CD8-positive, alpha-beta T cell (primary cell): ENCODE measurements at regions of chrX and their contacts with region 1.

Region 1: DNA sequence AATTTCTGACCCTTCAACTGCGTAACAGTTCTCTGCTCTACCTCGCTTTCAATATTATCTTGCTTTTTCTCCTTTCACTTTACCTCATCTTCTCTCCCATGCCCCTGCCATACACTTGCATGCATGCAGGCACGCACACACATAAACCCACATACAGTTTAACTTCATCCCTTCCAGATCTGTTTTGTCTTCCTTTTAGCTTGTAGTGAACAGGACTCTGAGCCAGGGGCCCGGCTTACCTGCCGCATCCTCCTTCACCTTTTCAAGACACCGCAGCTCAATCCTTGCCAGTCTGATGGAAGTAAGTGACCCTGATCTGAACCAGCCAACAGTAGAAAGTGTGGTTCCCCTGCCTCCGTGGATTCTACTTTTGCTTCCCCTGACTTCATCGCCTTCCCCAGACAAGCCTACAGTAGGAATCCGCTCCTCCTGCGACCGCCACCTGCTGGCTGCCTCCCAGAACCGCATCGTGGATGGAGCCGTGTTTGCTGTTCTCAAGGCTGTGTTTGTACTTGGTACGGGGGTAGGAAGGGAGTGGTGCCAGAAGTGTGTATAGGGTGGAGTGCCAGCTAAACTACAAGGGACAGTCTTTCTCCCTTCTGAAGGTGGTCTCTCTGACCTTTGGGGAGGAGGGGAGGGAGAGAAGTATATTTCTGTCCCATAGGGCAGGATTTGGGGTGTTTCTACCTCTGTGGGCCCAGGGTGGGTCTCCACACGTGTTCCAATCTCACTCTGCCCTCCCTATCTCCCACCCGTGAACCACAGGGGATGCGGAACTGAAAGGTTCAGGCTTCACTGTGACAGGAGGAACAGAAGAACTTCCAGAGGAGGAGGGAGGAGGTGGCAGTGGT is 10.7 kb downstream of the MED12 start:
- DNase-seq: peak; percentile 58 to 86 (median 73)
- ATAC-seq: peak; percentile 98
- H3K4me3 ChIP-seq: no peak overlapping the region
- H3K4me3 Mint-ChIP-seq: no peak overlapping the region
- H3K27ac ChIP-seq: peak overlapping the region in 1 of 2 experiments; percentile 32
- H3K27ac Mint-ChIP-seq: peak overlapping the region; percentile 91
- H3K4me1 ChIP-seq: peaks cover 10% of the 10 kb centered on the region
- H3K4me1 Mint-ChIP-seq: peaks cover 19% of the 10 kb centered on the region
- H3K27me3 ChIP-seq: no peaks in the 10 kb centered on the region
- H3K27me3 Mint-ChIP-seq: no peaks in the 10 kb centered on the region
- CTCF ChIP-seq: peak; percentile 62

Region 2: DNA sequence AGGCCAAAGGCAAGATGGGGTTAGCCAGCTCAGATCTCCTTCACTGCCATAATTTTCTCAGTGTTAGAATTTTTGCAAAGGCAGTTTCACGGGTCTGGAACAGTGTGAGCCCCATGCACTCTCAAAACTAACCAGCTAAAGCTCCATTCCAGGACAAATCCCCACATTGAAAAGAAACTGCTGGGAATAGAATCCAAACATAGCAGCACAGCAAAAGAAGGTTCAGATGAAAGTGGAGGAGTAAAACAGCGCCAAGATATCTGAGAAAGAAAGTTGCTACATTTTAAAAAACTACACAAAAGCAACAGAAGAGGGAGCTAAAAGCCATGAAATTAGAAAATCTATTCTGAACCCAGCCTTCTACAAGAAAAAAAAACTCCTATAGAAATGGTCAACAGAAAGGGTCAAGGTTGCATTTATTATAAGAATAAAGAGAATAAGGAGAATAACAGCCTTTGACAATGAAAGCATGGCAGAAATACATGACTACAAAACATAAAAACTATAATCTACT is 158.6 kb before region 1 on chrX:
- CTCF ChIA-PET with region 1: interaction called, 4 read pairs
- POLR2A ChIA-PET with region 1: no interaction called
- intact Hi-C with region 1: loop called in 1 of 2 experiments (anchors 2 kb)
- DNase-seq: peak in 2 of 9 experiments; percentile 15 to 29
- ATAC-seq: no peak
- H3K4me3 ChIP-seq: no peak overlapping the region
- H3K4me3 Mint-ChIP-seq: peak overlapping the region; percentile 62
- H3K27ac ChIP-seq: no peak overlapping the region
- H3K27ac Mint-ChIP-seq: no peak overlapping the region
- H3K4me1 ChIP-seq: no peaks in the 10 kb centered on the region
- H3K4me1 Mint-ChIP-seq: peaks cover 6% of the 10 kb centered on the region
- H3K27me3 ChIP-seq: no peaks in the 10 kb centered on the region
- H3K27me3 Mint-ChIP-seq: no peaks in the 10 kb centered on the region
- CTCF ChIP-seq: peak; percentile 33

Region 3: GRCh38 chrX:71068049-71068763 is 60.9 kb before region 1 on chrX and contains the start of gene SNX12:
- CTCF ChIA-PET with region 1: no interaction called
- POLR2A ChIA-PET with region 1: no interaction called
- intact Hi-C with region 1: loop called in 1 of 2 experiments (anchors 5 kb)
- DNase-seq: peak; percentile 70 to 95 (median 84)
- ATAC-seq: peak; percentile 92
- H3K4me3 ChIP-seq: peak within 1 kb of the TSS; percentile 76 to 88
- H3K4me3 Mint-ChIP-seq: peak within 1 kb of the TSS; percentile 94
- H3K27ac ChIP-seq: peak within 1 kb of the TSS; percentile 86 to 91
- H3K27ac Mint-ChIP-seq: peak within 1 kb of the TSS; percentile 99
- H3K4me1 ChIP-seq: peaks cover 13% of the 10 kb centered on the region
- H3K4me1 Mint-ChIP-seq: peaks cover 27% of the 10 kb centered on the region
- H3K27me3 ChIP-seq: no peaks in the 10 kb centered on the region
- H3K27me3 Mint-ChIP-seq: no peaks in the 10 kb centered on the region
- CTCF ChIP-seq: no peak
- total RNA-seq, gene SNX12: 23.9 to 27.1 TPM

Region 4: GRCh38 chrX:71095543-71095911 is 33.6 kb before region 1 on chrX and contains the start of gene FOXO4:
- CTCF ChIA-PET with region 1: interaction called, 80 read pairs
- POLR2A ChIA-PET with region 1: interaction called, 27 read pairs
- intact Hi-C with region 1: loop called (anchors 1 kb)
- DNase-seq: peak; percentile 74 to 94 (median 88)
- ATAC-seq: peak; percentile 82
- H3K4me3 ChIP-seq: peak within 1 kb of the TSS; percentile 73 to 78
- H3K4me3 Mint-ChIP-seq: peak within 1 kb of the TSS; percentile 93
- H3K27ac ChIP-seq: peak within 1 kb of the TSS; percentile 34 to 68
- H3K27ac Mint-ChIP-seq: peak within 1 kb of the TSS; percentile 93
- H3K4me1 ChIP-seq: peaks cover 30% of the 10 kb centered on the region
- H3K4me1 Mint-ChIP-seq: peaks cover 37% of the 10 kb centered on the region
- H3K27me3 ChIP-seq: no peaks in the 10 kb centered on the region
- H3K27me3 Mint-ChIP-seq: no peaks in the 10 kb centered on the region
- CTCF ChIP-seq: no peak
- total RNA-seq, gene FOXO4: 24.1 to 32.6 TPM

Region 5: GRCh38 chrX:71103110-71103983 is 25.8 kb before region 1 on chrX:
- CTCF ChIA-PET with region 1: interaction called, 80 read pairs
- POLR2A ChIA-PET with region 1: interaction called, 27 read pairs
- intact Hi-C with region 1: loop called (anchors 1 kb)
- DNase-seq: peak in 7 of 9 experiments; percentile 51 to 83 (median 69)
- ATAC-seq: peak; percentile 41
- H3K4me3 ChIP-seq: peak overlapping the region; percentile 23 to 31
- H3K4me3 Mint-ChIP-seq: peak overlapping the region; percentile 80
- H3K27ac ChIP-seq: peak overlapping the region; percentile 62 to 100
- H3K27ac Mint-ChIP-seq: peak overlapping the region; percentile 96
- H3K4me1 ChIP-seq: peaks cover 85% of the 10 kb centered on the region
- H3K4me1 Mint-ChIP-seq: peaks cover 83% of the 10 kb centered on the region
- H3K27me3 ChIP-seq: no peaks in the 10 kb centered on the region
- H3K27me3 Mint-ChIP-seq: no peaks in the 10 kb centered on the region
- CTCF ChIP-seq: no peak

Region 6: GRCh38 chrX:71111141-71111843 is 17.8 kb before region 1 on chrX and contains the start of gene IL2RG:
- CTCF ChIA-PET with region 1: interaction called, 21 read pairs
- POLR2A ChIA-PET with region 1: interaction called, 12 read pairs
- intact Hi-C with region 1: no loop called
- DNase-seq: peak; percentile 53 to 94 (median 76)
- ATAC-seq: peak; percentile 85
- H3K4me3 ChIP-seq: peak within 1 kb of the TSS; percentile 74 to 84
- H3K4me3 Mint-ChIP-seq: peak within 1 kb of the TSS; percentile 98
- H3K27ac ChIP-seq: peak within 1 kb of the TSS; percentile 96 to 100
- H3K27ac Mint-ChIP-seq: peak within 1 kb of the TSS; percentile 99
- H3K4me1 ChIP-seq: peaks cover 41% of the 10 kb centered on the region
- H3K4me1 Mint-ChIP-seq: peaks cover 42% of the 10 kb centered on the region
- H3K27me3 ChIP-seq: no peaks in the 10 kb centered on the region
- H3K27me3 Mint-ChIP-seq: no peaks in the 10 kb centered on the region
- CTCF ChIP-seq: no peak
- total RNA-seq, gene IL2RG: 166 to 197 TPM

Region 7: GRCh38 chrX:71118032-71118984 is 10.8 kb before region 1 on chrX and contains the start of gene MED12:
- CTCF ChIA-PET with region 1: interaction called, 21 read pairs
- POLR2A ChIA-PET with region 1: interaction called, 8 read pairs
- intact Hi-C with region 1: loop called in 1 of 2 experiments (anchors 1 kb)
- DNase-seq: peak; percentile 56 to 90 (median 83)
- ATAC-seq: peak; percentile 97
- H3K4me3 ChIP-seq: peak within 1 kb of the TSS; percentile 68 to 73
- H3K4me3 Mint-ChIP-seq: peak within 1 kb of the TSS; percentile 87
- H3K27ac ChIP-seq: peak within 1 kb of the TSS; percentile 78 to 82
- H3K27ac Mint-ChIP-seq: peak within 1 kb of the TSS; percentile 94
- H3K4me1 ChIP-seq: peaks cover 27% of the 10 kb centered on the region
- H3K4me1 Mint-ChIP-seq: peaks cover 36% of the 10 kb centered on the region
- H3K27me3 ChIP-seq: no peaks in the 10 kb centered on the region
- H3K27me3 Mint-ChIP-seq: no peaks in the 10 kb centered on the region
- CTCF ChIP-seq: no peak
- total RNA-seq, gene MED12: 54.5 to 57.4 TPM

Region 8: DNA sequence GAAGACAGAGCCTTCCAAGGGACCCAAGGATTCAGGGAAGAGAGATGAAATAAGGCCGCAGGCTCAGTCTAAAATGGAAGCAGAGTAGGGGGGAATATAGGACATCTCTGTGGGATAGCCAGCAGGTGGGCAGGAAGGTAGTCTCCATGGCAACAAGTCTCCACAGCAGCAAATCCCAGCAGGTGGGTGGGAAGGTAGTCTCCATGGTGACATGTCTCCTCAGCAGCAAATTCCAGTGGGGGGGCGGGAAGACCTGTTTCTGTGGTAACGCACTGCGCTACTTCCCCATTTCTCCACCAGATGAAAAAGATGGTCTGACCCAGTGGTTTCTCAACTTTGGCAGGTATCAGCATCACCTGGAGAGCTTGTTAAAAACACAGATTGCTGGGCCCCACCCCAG is 33.8 kb after region 1 on chrX:
- CTCF ChIA-PET with region 1: no interaction called
- POLR2A ChIA-PET with region 1: no interaction called
- intact Hi-C with region 1: no loop called
- DNase-seq: no peak
- ATAC-seq: no peak
- H3K4me3 ChIP-seq: no peak overlapping the region
- H3K4me3 Mint-ChIP-seq: no peak overlapping the region
- H3K27ac ChIP-seq: no peak overlapping the region
- H3K27ac Mint-ChIP-seq: peak overlapping the region; percentile 37
- H3K4me1 ChIP-seq: peaks cover 7% of the 10 kb centered on the region
- H3K4me1 Mint-ChIP-seq: peaks cover 8% of the 10 kb centered on the region
- H3K27me3 ChIP-seq: no peaks in the 10 kb centered on the region
- H3K27me3 Mint-ChIP-seq: no peaks in the 10 kb centered on the region
- CTCF ChIP-seq: no peak